ENCODE measurements at regions of chr6 and their contacts with region 1.

Region 1: GRCh38 chr6:38493931-38494547 is 145.7 kb downstream of the BTBD9 start:
- DNase-seq: peak; percentile 57
- ATAC-seq: peak; percentile 64; the same call in 1 of the 2 replicates
- H3K4me3 ChIP-seq: no peak overlapping the region
- H3K27ac ChIP-seq: no peak overlapping the region
- H3K4me1 ChIP-seq: peaks cover 0 to 9% of the 10 kb centered on the region in 2 experiments; a peak in 1 of 4 replicates
- H3K27me3 ChIP-seq: no peaks in the 10 kb centered on the region
- CTCF ChIP-seq: peak; percentile 70 to 93 (median 81)
- POLR2A ChIP-seq: no peak
- RAD21 ChIP-seq: peak; percentile 94

Region 2: GRCh38 chr6:37538107-37538506 is 955.9 kb before region 1 on chr6:
- CTCF ChIA-PET with region 1: interaction called, 11 read pairs
- POLR2A ChIA-PET with region 1: no interaction called
- RAD21 ChIA-PET with region 1: no interaction called
- intact Hi-C with region 1: loop called (anchors 10 kb)
- DNase-seq: peak; percentile 45
- ATAC-seq: peak; percentile 98
- H3K4me3 ChIP-seq: no peak overlapping the region
- H3K27ac ChIP-seq: no peak overlapping the region
- H3K4me1 ChIP-seq: peaks cover 0 to 9% of the 10 kb centered on the region in 2 experiments; a peak in 2 of 4 replicates
- H3K27me3 ChIP-seq: peaks cover 7% of the 10 kb centered on the region; the same call in 1 of the 2 replicates
- CTCF ChIP-seq: peak; percentile 74 to 88 (median 82)
- POLR2A ChIP-seq: no peak
- RAD21 ChIP-seq: peak; percentile 98

Region 3: GRCh38 chr6:37741757-37742400 is 752.2 kb before region 1 on chr6:
- CTCF ChIA-PET with region 1: interaction called, 3 read pairs
- POLR2A ChIA-PET with region 1: no interaction called
- RAD21 ChIA-PET with region 1: interaction called in 1 of 2 experiments, 3 read pairs
- intact Hi-C with region 1: loop called (anchors 10 kb)
- DNase-seq: no peak
- ATAC-seq: peak; percentile 92
- H3K4me3 ChIP-seq: no peak overlapping the region
- H3K27ac ChIP-seq: no peak overlapping the region
- H3K4me1 ChIP-seq: peaks cover 0 to 8% of the 10 kb centered on the region in 2 experiments; a peak in 2 of 4 replicates
- H3K27me3 ChIP-seq: peaks cover 11% of the 10 kb centered on the region
- CTCF ChIP-seq: peak; percentile 39 to 65 (median 63); a peak in 4 of 6 replicates
- POLR2A ChIP-seq: no peak
- RAD21 ChIP-seq: peak; percentile 57

Region 4: DNA sequence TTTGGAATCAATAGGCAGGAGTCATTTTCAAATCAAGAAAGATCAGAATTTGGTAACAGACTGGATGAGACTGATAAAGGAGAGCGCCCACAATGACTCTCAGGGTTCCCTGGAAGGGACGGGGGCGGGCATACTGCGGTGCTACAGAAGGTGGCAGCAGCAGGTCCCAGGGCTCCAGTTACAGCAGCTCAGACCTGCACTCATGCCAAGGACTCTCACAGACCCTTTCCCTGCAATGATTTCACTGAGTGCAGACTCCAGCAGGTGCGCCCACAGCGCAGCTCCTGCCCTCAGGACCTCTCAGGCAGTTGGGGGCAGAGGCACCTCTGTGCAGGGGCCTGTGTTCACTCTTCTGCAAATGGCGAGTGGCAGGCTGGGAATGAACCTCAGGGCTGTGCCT is 314.7 kb before region 1 on chr6:
- CTCF ChIA-PET with region 1: no interaction called
- POLR2A ChIA-PET with region 1: no interaction called
- RAD21 ChIA-PET with region 1: no interaction called
- intact Hi-C with region 1: loop called (anchors 2 kb)
- DNase-seq: no peak
- ATAC-seq: peak; percentile 54; the same call in 1 of the 2 replicates
- H3K4me3 ChIP-seq: no peak overlapping the region
- H3K27ac ChIP-seq: no peak overlapping the region
- H3K4me1 ChIP-seq: no peaks in the 10 kb centered on the region
- H3K27me3 ChIP-seq: no peaks in the 10 kb centered on the region
- CTCF ChIP-seq: no peak
- POLR2A ChIP-seq: no peak
- RAD21 ChIP-seq: peak; percentile 9; the same call in 1 of the 2 replicates

Region 5: DNA sequence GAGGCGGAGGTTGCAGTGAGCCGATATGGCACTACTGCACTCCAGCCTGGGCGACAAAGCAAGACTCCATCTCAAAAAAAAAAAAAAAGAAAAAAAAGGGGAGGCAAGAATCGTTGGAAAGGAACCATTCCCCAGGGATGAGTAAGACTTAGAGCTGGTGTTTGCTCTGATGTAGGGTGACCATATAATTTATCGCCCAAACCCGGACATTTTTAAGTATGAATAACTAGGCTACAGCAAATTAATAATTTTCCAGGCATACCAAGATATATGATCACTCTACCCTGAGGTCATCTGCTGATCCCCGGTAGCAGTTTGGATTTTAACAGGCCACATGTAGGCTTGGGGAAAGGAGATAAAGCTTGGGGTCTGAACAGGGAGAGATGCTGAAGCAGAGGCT is 115.2 kb before region 1 on chr6:
- CTCF ChIA-PET with region 1: no interaction called
- POLR2A ChIA-PET with region 1: no interaction called
- RAD21 ChIA-PET with region 1: no interaction called
- intact Hi-C with region 1: no loop called
- DNase-seq: no peak
- ATAC-seq: no peak
- H3K4me3 ChIP-seq: no peak overlapping the region
- H3K27ac ChIP-seq: no peak overlapping the region
- H3K4me1 ChIP-seq: no peaks in the 10 kb centered on the region
- H3K27me3 ChIP-seq: no peaks in the 10 kb centered on the region
- CTCF ChIP-seq: no peak
- POLR2A ChIP-seq: no peak
- RAD21 ChIP-seq: no peak

Region 6: DNA sequence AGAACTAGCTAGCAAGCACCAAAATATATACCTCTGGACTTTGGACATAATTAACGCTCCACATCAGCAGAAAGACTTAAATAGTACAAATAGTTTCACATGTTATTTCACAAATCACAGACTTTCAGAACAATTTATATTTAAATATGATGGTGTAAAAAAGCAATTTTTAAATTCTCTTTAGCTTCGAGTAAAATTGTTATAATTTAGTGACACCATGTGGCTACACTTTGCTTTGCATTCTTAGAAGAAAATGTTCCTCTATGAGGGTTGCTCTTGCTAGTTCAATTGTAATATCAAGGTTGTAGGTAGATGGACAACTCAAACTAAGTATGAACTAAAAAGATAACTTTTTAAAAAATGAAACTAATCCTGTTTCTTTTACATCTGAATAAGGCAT is 76.7 kb after region 1 on chr6:
- CTCF ChIA-PET with region 1: interaction called, 12 read pairs
- POLR2A ChIA-PET with region 1: no interaction called
- RAD21 ChIA-PET with region 1: interaction called in 1 of 2 experiments, 5 read pairs
- intact Hi-C with region 1: no loop called
- DNase-seq: no peak
- ATAC-seq: peak; percentile 42; the same call in 1 of the 2 replicates
- H3K4me3 ChIP-seq: no peak overlapping the region
- H3K27ac ChIP-seq: no peak overlapping the region
- H3K4me1 ChIP-seq: peaks cover 0 to 7% of the 10 kb centered on the region in 2 experiments; a peak in 2 of 4 replicates
- H3K27me3 ChIP-seq: no peaks in the 10 kb centered on the region
- CTCF ChIP-seq: peak; percentile 20 to 62 (median 36); a peak in 3 of 6 replicates
- POLR2A ChIP-seq: no peak
- RAD21 ChIP-seq: peak; percentile 51

Measured in HCT116 (cell line).